ENCODE measurements at regions of chr13 and their contacts with region 1.

Region 1: GRCh38 chr13:30865123-30866049 is 40.7 kb upstream of the MEDAG start:
- DNase-seq: peak; percentile 75
- ATAC-seq: peak; percentile 95
- H3K4me3 ChIP-seq: peak overlapping the region; percentile 61
- H3K27ac ChIP-seq: peak overlapping the region; percentile 76
- H3K4me1 ChIP-seq: peaks cover 17% of the 10 kb centered on the region
- H3K27me3 ChIP-seq: no peaks in the 10 kb centered on the region
- CTCF ChIP-seq: peak; percentile 89

Region 2: GRCh38 chr13:30647824-30648521 is 217.4 kb before region 1 on chr13:
- CTCF ChIA-PET with region 1: no interaction called
- POLR2A ChIA-PET with region 1: no interaction called
- intact Hi-C with region 1: no loop called
- DNase-seq: no peak
- ATAC-seq: no peak
- H3K4me3 ChIP-seq: no peak overlapping the region
- H3K27ac ChIP-seq: no peak overlapping the region
- H3K4me1 ChIP-seq: no peaks in the 10 kb centered on the region
- H3K27me3 ChIP-seq: no peaks in the 10 kb centered on the region
- CTCF ChIP-seq: no peak

Region 3: GRCh38 chr13:30679483-30680330 is 185.7 kb before region 1 on chr13:
- CTCF ChIA-PET with region 1: no interaction called
- POLR2A ChIA-PET with region 1: no interaction called
- intact Hi-C with region 1: loop called (anchors 5 kb)
- DNase-seq: peak; percentile 27
- ATAC-seq: peak; percentile 75
- H3K4me3 ChIP-seq: no peak overlapping the region
- H3K27ac ChIP-seq: no peak overlapping the region
- H3K4me1 ChIP-seq: peaks cover 4% of the 10 kb centered on the region; the same call in 1 of the 2 replicates
- H3K27me3 ChIP-seq: no peaks in the 10 kb centered on the region
- CTCF ChIP-seq: peak; percentile 64

Region 4: DNA sequence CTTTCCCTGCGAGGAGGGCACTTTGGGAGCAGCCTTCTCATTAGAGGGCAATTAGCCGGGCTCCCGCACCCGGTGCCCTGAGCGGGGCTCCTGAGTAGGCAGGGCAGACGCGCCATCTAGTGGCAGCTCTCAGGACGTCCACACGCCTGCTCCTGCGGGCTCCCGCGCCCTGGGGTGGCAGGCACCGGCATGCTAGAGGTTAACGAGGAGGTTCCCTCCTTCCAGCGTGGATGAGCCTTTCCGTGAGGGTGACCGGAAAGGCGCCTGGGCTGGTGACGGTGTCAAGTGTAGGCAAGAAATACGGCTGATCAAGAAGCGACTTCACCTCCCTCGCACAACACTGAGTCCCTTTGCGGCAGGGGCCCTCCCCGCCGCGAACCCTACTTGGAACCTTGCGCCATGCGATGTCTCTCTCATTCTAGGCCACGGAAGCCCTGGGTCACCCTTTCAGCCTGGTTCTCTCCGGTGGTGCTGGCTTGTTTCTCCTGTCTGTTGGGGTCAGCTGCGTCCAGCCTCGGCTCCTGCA is 62.4 kb before region 1 on chr13:
- CTCF ChIA-PET with region 1: interaction called, 6 read pairs
- POLR2A ChIA-PET with region 1: no interaction called
- intact Hi-C with region 1: loop called (anchors 1 kb)
- DNase-seq: peak; percentile 73
- ATAC-seq: peak; percentile 97
- H3K4me3 ChIP-seq: peak overlapping the region; percentile 26; the same call in 1 of the 2 replicates
- H3K27ac ChIP-seq: no peak overlapping the region
- H3K4me1 ChIP-seq: no peaks in the 10 kb centered on the region; the same call in 1 of the 2 replicates
- H3K27me3 ChIP-seq: no peaks in the 10 kb centered on the region
- CTCF ChIP-seq: peak; percentile 89

Region 5: GRCh38 chr13:30905932-30906383 is 40.6 kb after region 1 on chr13 and contains the start of gene MEDAG:
- CTCF ChIA-PET with region 1: no interaction called
- POLR2A ChIA-PET with region 1: no interaction called
- intact Hi-C with region 1: no loop called
- DNase-seq: no peak
- ATAC-seq: no peak
- H3K4me3 ChIP-seq: no peak within 1 kb of the TSS
- H3K27ac ChIP-seq: no peak within 1 kb of the TSS
- H3K4me1 ChIP-seq: no peaks in the 10 kb centered on the region
- H3K27me3 ChIP-seq: peaks cover 68% of the 10 kb centered on the region
- CTCF ChIP-seq: no peak
- total RNA-seq, gene MEDAG: not detected in 2 replicates

Region 6: DNA sequence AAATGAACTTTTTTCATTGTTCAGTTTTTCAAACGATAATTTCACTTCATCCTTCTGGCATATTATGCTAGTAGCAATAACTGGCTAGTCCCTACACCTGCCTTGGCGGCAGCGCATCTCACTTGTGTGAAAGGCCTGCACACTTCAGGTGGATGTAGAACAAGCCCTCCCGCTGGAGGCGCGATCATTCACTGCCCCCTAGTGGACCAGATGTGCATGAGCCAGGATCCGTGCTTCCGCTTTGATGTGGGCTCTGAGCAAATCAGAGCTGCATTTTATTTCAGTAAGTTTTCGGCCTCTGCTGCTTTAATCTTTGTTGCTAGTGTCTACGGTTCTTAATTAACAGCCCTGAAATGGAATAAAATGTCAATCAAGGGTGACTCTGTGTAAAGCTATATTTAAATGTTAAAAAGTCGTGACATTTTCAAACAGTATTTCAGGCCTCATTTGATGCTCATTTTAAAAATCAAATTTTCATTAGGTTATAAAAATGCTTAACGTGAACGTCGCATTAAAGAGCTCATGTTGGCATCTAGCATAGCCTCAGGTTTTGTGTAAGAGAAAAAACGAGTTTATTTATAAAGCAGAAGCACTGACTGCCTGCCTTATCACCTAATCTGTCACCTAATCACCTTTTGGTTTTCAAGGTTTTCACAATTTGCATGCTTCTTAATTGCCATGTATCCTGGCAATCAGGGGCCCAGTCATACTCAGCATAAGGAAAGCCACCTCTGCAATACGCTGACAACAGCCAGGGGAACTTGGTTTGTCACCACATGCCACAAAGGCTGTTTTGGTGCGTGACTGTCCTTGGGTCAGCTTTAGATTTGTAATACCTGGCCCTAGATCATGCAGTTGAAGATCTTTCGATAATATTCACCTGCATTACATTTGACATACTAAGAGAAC is 179.2 kb after region 1 on chr13:
- CTCF ChIA-PET with region 1: interaction called, 5 read pairs
- POLR2A ChIA-PET with region 1: no interaction called
- intact Hi-C with region 1: loop called (anchors 1 kb)
- DNase-seq: peak; percentile 86
- ATAC-seq: peak; percentile 70
- H3K4me3 ChIP-seq: peak overlapping the region; percentile 42; the same call in 1 of the 2 replicates
- H3K27ac ChIP-seq: peak overlapping the region; percentile 93
- H3K4me1 ChIP-seq: peaks cover 24% of the 10 kb centered on the region
- H3K27me3 ChIP-seq: no peaks in the 10 kb centered on the region
- CTCF ChIP-seq: peak; percentile 89